Activated B cell treated with CpG ODN at 0.5 μM for 24 hours (primary cell): ENCODE measurements at regions of chr2 and their contacts with region 1.

Region 1: GRCh38 chr2:8544786-8545694 is 136.8 kb upstream of the ID2 start:
- DNase-seq: peak; percentile 58
- ATAC-seq: peak; percentile 66
- H3K4me3 Mint-ChIP-seq: peak overlapping the region; percentile 38
- H3K27ac Mint-ChIP-seq: peak overlapping the region; percentile 90
- H3K4me1 Mint-ChIP-seq: peaks cover 52% of the 10 kb centered on the region
- H3K27me3 Mint-ChIP-seq: peaks cover 32% of the 10 kb centered on the region
- CTCF ChIP-seq: no peak

Region 2: GRCh38 chr2:8303322-8303832 is 241.7 kb before region 1 on chr2:
- CTCF ChIA-PET with region 1: no interaction called
- POLR2A ChIA-PET with region 1: no interaction called
- intact Hi-C with region 1: loop called (anchors 1 kb)
- DNase-seq: peak; percentile 39
- ATAC-seq: peak; percentile 83
- H3K4me3 Mint-ChIP-seq: peak overlapping the region; percentile 38
- H3K27ac Mint-ChIP-seq: peak overlapping the region; percentile 59
- H3K4me1 Mint-ChIP-seq: peaks cover 43% of the 10 kb centered on the region
- H3K27me3 Mint-ChIP-seq: peaks cover 63% of the 10 kb centered on the region
- CTCF ChIP-seq: no peak

Region 3: GRCh38 chr2:8477552-8478470 is 67.2 kb before region 1 on chr2:
- CTCF ChIA-PET with region 1: interaction called, 3 read pairs
- POLR2A ChIA-PET with region 1: interaction called, 18 read pairs
- intact Hi-C with region 1: loop called (anchors 1 kb)
- DNase-seq: peak; percentile 34
- ATAC-seq: peak; percentile 70
- H3K4me3 Mint-ChIP-seq: peak overlapping the region; percentile 71
- H3K27ac Mint-ChIP-seq: peak overlapping the region; percentile 89
- H3K4me1 Mint-ChIP-seq: peaks cover 59% of the 10 kb centered on the region
- H3K27me3 Mint-ChIP-seq: peaks cover 63% of the 10 kb centered on the region
- CTCF ChIP-seq: no peak

Region 4: DNA sequence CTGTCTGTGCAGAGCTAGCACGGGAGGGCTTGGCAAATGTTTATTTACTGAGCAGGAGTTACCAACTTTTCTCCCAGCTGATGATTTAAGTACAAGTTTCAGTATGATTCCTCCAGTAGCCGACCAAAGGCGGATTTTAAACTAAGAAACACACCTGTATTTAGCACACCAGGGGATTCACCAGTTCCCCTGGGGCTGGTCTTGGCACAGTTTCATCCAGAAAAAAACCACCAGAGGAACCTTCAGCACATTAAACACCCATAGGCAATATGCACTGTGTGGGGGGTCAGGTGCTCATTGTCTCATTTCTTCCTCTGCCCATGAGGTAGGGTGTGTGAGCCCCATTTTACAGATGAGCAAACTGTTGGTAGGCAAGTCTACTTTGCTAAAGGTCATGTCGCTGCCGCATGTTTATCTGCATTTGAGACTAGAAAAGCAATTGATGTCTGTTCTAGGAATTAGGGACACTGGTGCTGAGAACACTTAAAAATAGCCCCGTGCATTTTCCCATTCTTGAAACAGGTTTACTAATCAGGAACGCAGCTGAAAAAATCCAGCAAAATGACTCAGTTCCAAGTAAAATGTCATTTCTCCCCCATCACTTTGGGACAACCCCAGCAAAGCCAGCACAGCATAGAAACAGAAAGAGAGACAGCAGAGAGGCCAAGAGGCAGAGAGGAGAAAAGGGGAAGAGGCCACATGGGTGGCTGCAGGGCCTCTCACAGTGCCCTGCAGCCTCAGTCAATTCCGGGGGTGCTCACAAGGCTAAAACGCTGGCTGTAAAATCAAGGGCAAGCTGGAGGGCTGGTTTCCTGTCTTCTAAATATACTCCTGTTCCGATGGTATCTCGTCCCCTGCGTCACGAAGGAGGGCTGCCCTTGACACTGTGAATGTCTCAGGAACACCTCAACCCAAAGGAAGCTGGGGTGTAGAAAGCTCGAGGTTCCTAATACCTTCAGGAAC is 30.0 kb before region 1 on chr2:
- CTCF ChIA-PET with region 1: no interaction called
- POLR2A ChIA-PET with region 1: interaction called, 5 read pairs
- intact Hi-C with region 1: loop called (anchors 1 kb)
- DNase-seq: no peak
- ATAC-seq: peak; percentile 84
- H3K4me3 Mint-ChIP-seq: peak overlapping the region; percentile 36
- H3K27ac Mint-ChIP-seq: peak overlapping the region; percentile 27
- H3K4me1 Mint-ChIP-seq: peaks cover 27% of the 10 kb centered on the region
- H3K27me3 Mint-ChIP-seq: peaks cover 22% of the 10 kb centered on the region
- CTCF ChIP-seq: no peak

Region 5: GRCh38 chr2:8534729-8535468 is 10.1 kb before region 1 on chr2:
- CTCF ChIA-PET with region 1: no interaction called
- POLR2A ChIA-PET with region 1: interaction called, 7 read pairs
- intact Hi-C with region 1: loop called (anchors 1 kb)
- DNase-seq: no peak
- ATAC-seq: peak; percentile 70
- H3K4me3 Mint-ChIP-seq: no peak overlapping the region
- H3K27ac Mint-ChIP-seq: no peak overlapping the region
- H3K4me1 Mint-ChIP-seq: peaks cover 42% of the 10 kb centered on the region
- H3K27me3 Mint-ChIP-seq: peaks cover 23% of the 10 kb centered on the region
- CTCF ChIP-seq: no peak

Region 6: DNA sequence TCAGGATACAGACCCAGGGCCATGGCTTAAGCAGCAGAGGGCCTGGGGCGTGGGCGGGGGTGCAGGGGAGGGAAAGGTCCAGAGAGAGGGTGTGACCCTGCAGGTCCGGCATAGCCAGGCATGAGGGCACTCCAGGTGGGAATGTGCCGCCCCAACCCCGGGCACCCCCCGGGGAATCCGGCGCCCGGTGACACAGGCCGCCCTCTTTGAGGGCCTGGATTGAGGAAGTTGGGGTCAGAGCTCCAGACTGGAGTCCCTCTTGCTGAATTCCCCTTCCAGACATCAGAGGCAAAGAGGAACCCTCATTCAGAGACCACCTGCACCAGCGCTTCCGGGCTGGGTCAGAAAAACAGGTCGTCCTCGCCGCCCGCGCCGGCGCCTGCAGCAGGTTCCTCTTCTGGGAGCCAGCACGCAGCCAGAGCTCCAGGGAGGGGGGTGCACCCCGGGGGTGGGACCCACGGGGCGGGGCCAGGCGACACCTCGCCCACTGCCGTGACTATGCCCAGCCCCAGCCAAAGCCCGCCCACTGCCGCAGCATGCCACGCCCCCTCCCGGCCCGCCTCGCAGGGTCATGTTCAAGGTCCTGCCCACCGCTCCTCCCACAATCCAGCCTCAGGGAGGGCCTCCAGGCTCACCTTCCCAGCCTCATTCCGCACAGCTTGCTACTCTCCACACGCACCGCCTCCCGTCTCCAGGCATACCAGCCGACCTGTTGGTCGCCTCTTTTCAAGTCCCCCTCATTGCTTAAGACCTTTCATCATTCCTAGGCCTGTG is 38.5 kb after region 1 on chr2:
- CTCF ChIA-PET with region 1: no interaction called
- POLR2A ChIA-PET with region 1: interaction called, 16 read pairs
- intact Hi-C with region 1: loop called (anchors 1 kb)
- DNase-seq: peak; percentile 80
- ATAC-seq: peak; percentile 94
- H3K4me3 Mint-ChIP-seq: peak overlapping the region; percentile 64
- H3K27ac Mint-ChIP-seq: peak overlapping the region; percentile 27
- H3K4me1 Mint-ChIP-seq: peaks cover 47% of the 10 kb centered on the region
- H3K27me3 Mint-ChIP-seq: peaks cover 18% of the 10 kb centered on the region
- CTCF ChIP-seq: no peak

Region 7: GRCh38 chr2:8836971-8837794 is 292.1 kb after region 1 on chr2 and contains the start of gene KIDINS220:
- CTCF ChIA-PET with region 1: no interaction called
- POLR2A ChIA-PET with region 1: no interaction called
- intact Hi-C with region 1: no loop called
- DNase-seq: peak; percentile 74
- ATAC-seq: peak; percentile 96
- H3K4me3 Mint-ChIP-seq: peak within 1 kb of the TSS; percentile 98
- H3K27ac Mint-ChIP-seq: peak within 1 kb of the TSS; percentile 96
- H3K4me1 Mint-ChIP-seq: peaks cover 40% of the 10 kb centered on the region
- H3K27me3 Mint-ChIP-seq: peaks cover 6% of the 10 kb centered on the region
- CTCF ChIP-seq: no peak
- total RNA-seq, gene KIDINS220: 26.4 and 26.9 TPM in 2 replicates